MCF 10A (cell line): ENCODE measurements at regions of chr9 and their contacts with region 1.

Region 1: GRCh38 chr9:104682642-104683041 is 11.7 kb upstream of the OR13D1 start:
- DNase-seq: peak; percentile 78
- H3K4me3 Mint-ChIP-seq: no peak overlapping the region
- H3K27ac Mint-ChIP-seq: no peak overlapping the region
- H3K4me1 Mint-ChIP-seq: no peaks in the 10 kb centered on the region
- H3K27me3 Mint-ChIP-seq: no peaks in the 10 kb centered on the region
- CTCF ChIP-seq: peak; percentile 53

Region 2: GRCh38 chr9:104177003-104177611 is 505.5 kb before region 1 on chr9:
- CTCF ChIA-PET with region 1: interaction called, 6 read pairs
- POLR2A ChIA-PET with region 1: no interaction called
- intact Hi-C with region 1: loop called (anchors 1 kb)
- DNase-seq: peak; percentile 53
- H3K4me3 Mint-ChIP-seq: no peak overlapping the region
- H3K27ac Mint-ChIP-seq: no peak overlapping the region
- H3K4me1 Mint-ChIP-seq: no peaks in the 10 kb centered on the region
- H3K27me3 Mint-ChIP-seq: no peaks in the 10 kb centered on the region
- CTCF ChIP-seq: peak; percentile 58

Region 3: GRCh38 chr9:104448036-104448435 is 234.6 kb before region 1 on chr9:
- CTCF ChIA-PET with region 1: no interaction called
- POLR2A ChIA-PET with region 1: no interaction called
- intact Hi-C with region 1: no loop called
- DNase-seq: no peak
- H3K4me3 Mint-ChIP-seq: no peak overlapping the region
- H3K27ac Mint-ChIP-seq: no peak overlapping the region
- H3K4me1 Mint-ChIP-seq: no peaks in the 10 kb centered on the region
- H3K27me3 Mint-ChIP-seq: no peaks in the 10 kb centered on the region
- CTCF ChIP-seq: no peak

Region 4: DNA sequence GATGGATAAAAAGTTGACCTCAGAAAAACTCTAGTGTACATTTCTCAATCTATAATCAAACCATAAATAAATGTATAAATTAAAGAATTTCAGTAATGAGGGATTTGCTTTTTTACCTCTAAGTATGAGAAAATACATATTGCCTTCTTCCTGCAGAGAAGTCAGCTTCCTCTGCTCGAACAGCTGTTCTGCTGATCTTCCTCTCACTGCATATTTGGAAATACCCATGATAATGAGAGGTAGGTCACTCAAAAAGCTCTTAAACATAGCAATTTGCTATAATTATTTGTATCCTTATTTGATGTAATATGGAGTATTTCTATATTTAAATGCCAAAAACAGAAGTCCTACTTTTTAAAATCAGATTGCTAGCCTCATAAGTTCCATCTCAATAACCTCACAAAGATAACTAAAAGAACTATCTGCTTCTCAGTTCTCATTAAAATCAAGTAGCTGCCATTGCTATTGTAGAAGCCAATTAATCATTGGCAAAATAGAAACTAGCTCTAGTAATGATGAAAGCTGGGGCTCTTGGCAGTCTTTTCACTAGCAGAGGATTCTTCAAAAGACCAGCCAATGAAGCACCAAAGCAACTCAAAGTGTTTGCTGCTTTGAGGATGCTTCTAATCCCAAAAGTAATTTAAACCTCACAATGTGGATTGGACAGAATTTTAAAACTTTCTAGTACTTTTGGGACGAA is 24.0 kb before region 1 on chr9:
- CTCF ChIA-PET with region 1: no interaction called
- POLR2A ChIA-PET with region 1: no interaction called
- intact Hi-C with region 1: no loop called
- DNase-seq: no peak
- H3K4me3 Mint-ChIP-seq: no peak overlapping the region
- H3K27ac Mint-ChIP-seq: no peak overlapping the region
- H3K4me1 Mint-ChIP-seq: no peaks in the 10 kb centered on the region
- H3K27me3 Mint-ChIP-seq: no peaks in the 10 kb centered on the region
- CTCF ChIP-seq: no peak

Region 5: GRCh38 chr9:104780799-104781395 is 98.3 kb after region 1 on chr9:
- CTCF ChIA-PET with region 1: no interaction called
- POLR2A ChIA-PET with region 1: no interaction called
- intact Hi-C with region 1: no loop called
- DNase-seq: peak; percentile 71
- H3K4me3 Mint-ChIP-seq: no peak overlapping the region
- H3K27ac Mint-ChIP-seq: no peak overlapping the region
- H3K4me1 Mint-ChIP-seq: no peaks in the 10 kb centered on the region
- H3K27me3 Mint-ChIP-seq: no peaks in the 10 kb centered on the region
- CTCF ChIP-seq: peak; percentile 45